ENCODE measurements at regions of chr7 and their contacts with region 1.

Region 1: DNA sequence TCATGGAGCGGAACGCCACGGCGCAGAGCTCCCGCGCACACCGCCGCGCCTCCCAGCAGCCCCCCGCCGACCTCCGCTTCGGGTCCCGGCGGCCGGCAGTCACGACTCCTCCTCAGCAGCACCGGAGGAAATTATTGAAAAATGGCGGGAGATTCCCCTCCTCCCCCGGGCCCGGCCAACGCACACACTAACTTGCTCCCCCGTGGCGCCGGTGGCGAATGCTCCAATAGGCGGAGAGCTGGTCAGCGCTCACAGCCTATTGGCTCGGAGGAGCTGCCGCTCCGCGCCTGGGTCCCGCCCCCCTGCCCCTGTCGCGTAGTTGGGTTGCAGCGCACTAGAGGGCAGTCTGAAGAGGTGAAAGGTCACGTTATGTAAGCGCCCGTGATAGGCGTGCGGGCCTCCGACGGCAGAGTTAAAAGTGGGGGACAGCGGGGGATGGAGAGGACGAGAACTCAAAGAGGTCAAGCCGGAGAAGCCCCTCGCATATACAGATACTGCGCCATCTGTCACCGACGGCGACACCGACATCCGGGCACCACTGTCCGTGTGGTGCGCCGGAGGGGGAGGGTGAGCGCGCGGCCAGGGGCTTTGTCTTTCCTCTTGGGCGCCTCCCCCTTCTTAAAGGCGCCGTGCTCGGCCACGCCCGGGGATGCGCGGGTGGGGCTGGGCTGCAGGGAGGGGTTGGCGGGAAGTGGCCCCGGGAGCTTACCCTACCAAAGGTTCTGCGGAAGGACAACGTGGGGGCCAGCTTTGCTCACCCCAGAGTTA is at the start of gene BAZ1B:
- DNase-seq: peak; percentile 99
- H3K4me3 ChIP-seq: peak within 1 kb of the TSS; percentile 77
- H3K4me3 Mint-ChIP-seq: peak within 1 kb of the TSS; percentile 93
- H3K27ac Mint-ChIP-seq: peak within 1 kb of the TSS; percentile 98
- H3K4me1 ChIP-seq: peaks cover 18% of the 10 kb centered on the region
- H3K4me1 Mint-ChIP-seq: peaks cover 18% of the 10 kb centered on the region
- H3K27me3 ChIP-seq: no peaks in the 10 kb centered on the region
- H3K27me3 Mint-ChIP-seq: no peaks in the 10 kb centered on the region
- CTCF ChIP-seq: peak in 1 of 2 experiments; percentile 21
- total RNA-seq, gene BAZ1B: 85.2 and 85.7 TPM in 2 replicates

Region 2: GRCh38 chr7:73541722-73542121 is 19.4 kb after region 1 on chr7:
- CTCF ChIA-PET with region 1: no interaction called
- POLR2A ChIA-PET with region 1: interaction called, 6 read pairs
- intact Hi-C with region 1: loop called (anchors 2 kb)
- DNase-seq: no peak
- H3K4me3 ChIP-seq: no peak overlapping the region
- H3K4me3 Mint-ChIP-seq: no peak overlapping the region
- H3K27ac Mint-ChIP-seq: no peak overlapping the region
- H3K4me1 ChIP-seq: no peaks in the 10 kb centered on the region
- H3K4me1 Mint-ChIP-seq: no peaks in the 10 kb centered on the region
- H3K27me3 ChIP-seq: no peaks in the 10 kb centered on the region
- H3K27me3 Mint-ChIP-seq: no peaks in the 10 kb centered on the region
- CTCF ChIP-seq: no peak

Region 3: GRCh38 chr7:73557108-73557396 is 34.8 kb after region 1 on chr7:
- CTCF ChIA-PET with region 1: interaction called, 4 read pairs
- POLR2A ChIA-PET with region 1: interaction called, 24 read pairs
- intact Hi-C with region 1: loop called (anchors 1 kb)
- DNase-seq: peak; percentile 93 to 97
- H3K4me3 ChIP-seq: peak overlapping the region; percentile 98
- H3K4me3 Mint-ChIP-seq: peak overlapping the region; percentile 96
- H3K27ac Mint-ChIP-seq: peak overlapping the region; percentile 99
- H3K4me1 ChIP-seq: peaks cover 10% of the 10 kb centered on the region; the same call in 1 of the 2 replicates
- H3K4me1 Mint-ChIP-seq: peaks cover 11% of the 10 kb centered on the region
- H3K27me3 ChIP-seq: no peaks in the 10 kb centered on the region
- H3K27me3 Mint-ChIP-seq: no peaks in the 10 kb centered on the region
- CTCF ChIP-seq: no peak

Region 4: GRCh38 chr7:73758581-73759138 is 236.4 kb after region 1 on chr7:
- CTCF ChIA-PET with region 1: no interaction called
- POLR2A ChIA-PET with region 1: no interaction called
- intact Hi-C with region 1: no loop called
- DNase-seq: no peak
- H3K4me3 ChIP-seq: no peak overlapping the region
- H3K4me3 Mint-ChIP-seq: no peak overlapping the region
- H3K27ac Mint-ChIP-seq: no peak overlapping the region
- H3K4me1 ChIP-seq: peaks cover 7% of the 10 kb centered on the region; the same call in 1 of the 2 replicates
- H3K4me1 Mint-ChIP-seq: peaks cover 8% of the 10 kb centered on the region
- H3K27me3 ChIP-seq: no peaks in the 10 kb centered on the region
- H3K27me3 Mint-ChIP-seq: no peaks in the 10 kb centered on the region
- CTCF ChIP-seq: no peak

Measured in Caco-2 (cell line).